MCF 10A (cell line): ENCODE measurements at regions of chr20 and their contacts with region 1.

Region 1: DNA sequence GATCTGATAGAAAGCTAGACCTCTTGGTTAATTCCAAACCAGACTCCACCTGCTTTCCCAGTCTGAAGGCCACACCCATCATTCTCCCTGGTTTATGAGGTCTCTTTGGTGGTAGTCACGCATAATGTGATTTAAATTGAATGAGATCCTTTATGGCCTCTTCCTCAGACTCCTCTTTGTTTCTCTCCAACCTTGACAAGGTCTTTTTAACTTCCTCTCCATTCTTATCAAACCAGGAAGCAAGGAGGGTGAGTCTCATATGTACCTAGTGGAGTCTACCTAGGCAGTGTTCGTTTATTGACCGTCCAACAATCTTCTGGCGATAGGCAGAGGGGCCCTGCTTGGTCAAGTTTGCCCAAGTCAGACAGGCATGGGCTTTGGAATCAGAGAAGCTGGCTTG is 184.2 kb upstream of the LAMP5 start:
- DNase-seq: no peak
- H3K4me3 Mint-ChIP-seq: no peak overlapping the region
- H3K27ac Mint-ChIP-seq: no peak overlapping the region
- H3K4me1 Mint-ChIP-seq: no peaks in the 10 kb centered on the region
- H3K27me3 Mint-ChIP-seq: no peaks in the 10 kb centered on the region
- CTCF ChIP-seq: no peak

Region 2: DNA sequence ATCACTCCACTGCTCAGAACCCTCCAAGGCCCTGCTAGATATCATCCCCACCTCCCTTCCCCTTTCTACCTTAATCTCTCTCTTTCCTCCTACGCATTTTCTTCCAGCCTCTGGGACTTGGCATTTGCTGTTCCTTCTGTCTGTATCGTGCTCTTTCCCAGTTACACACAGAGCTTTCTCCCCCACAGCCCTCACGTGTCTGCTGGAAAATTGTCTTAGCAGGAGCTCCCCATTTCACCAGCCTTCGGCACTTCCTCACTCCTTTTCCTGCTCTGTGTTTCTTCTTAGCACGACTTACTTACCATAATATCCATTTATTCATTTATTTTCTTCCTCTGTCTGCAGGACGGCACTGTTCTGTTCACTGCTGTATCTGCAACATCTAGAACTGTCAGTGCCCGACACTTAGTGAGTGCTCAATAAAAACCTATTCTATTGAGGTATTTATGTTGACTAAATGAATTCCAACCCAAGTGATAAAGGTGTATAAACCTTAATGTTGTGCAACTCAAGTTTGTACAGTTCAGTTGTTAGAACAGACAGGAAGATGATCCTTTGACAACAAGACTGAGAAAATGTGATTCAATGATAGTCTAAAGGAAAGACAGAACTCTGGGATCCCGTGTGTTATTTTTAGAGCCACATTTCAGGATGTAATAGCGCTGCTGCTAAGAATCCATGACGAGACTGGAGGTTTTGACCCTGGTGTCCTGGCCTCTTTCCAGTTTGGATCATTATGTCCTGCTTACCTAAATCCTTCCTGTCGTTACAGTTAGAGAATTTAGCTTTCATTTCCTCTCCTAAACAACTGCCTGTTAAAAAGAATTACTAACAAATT is 14.2 kb after region 1 on chr20:
- CTCF ChIA-PET with region 1: interaction called, 10 read pairs
- POLR2A ChIA-PET with region 1: interaction called, 3 read pairs
- intact Hi-C with region 1: no loop called
- DNase-seq: peak; percentile 66
- H3K4me3 Mint-ChIP-seq: no peak overlapping the region
- H3K27ac Mint-ChIP-seq: no peak overlapping the region
- H3K4me1 Mint-ChIP-seq: peaks cover 16% of the 10 kb centered on the region
- H3K27me3 Mint-ChIP-seq: no peaks in the 10 kb centered on the region
- CTCF ChIP-seq: no peak

Region 3: GRCh38 chr20:9392892-9393857 is 63.0 kb after region 1 on chr20:
- CTCF ChIA-PET with region 1: no interaction called
- POLR2A ChIA-PET with region 1: no interaction called
- intact Hi-C with region 1: no loop called
- DNase-seq: peak; percentile 76
- H3K4me3 Mint-ChIP-seq: no peak overlapping the region
- H3K27ac Mint-ChIP-seq: no peak overlapping the region
- H3K4me1 Mint-ChIP-seq: no peaks in the 10 kb centered on the region
- H3K27me3 Mint-ChIP-seq: no peaks in the 10 kb centered on the region
- CTCF ChIP-seq: peak; percentile 71